Activated CD4-positive, alpha-beta memory T cell treated with anti-CD3 and anti-CD28 coated beads, Interleukin-2, amount 10 ng/mL, durations not matched to agents 7 days and 5 days (primary cell): ENCODE measurements at regions of chr6 and their contacts with region 1.

Region 1: GRCh38 chr6:131914967-131915751 is 36.0 kb downstream of the CCN2 start:
- DNase-seq: peak; percentile 59
- H3K4me3 Mint-ChIP-seq: no peak overlapping the region
- H3K27ac Mint-ChIP-seq: no peak overlapping the region
- H3K4me1 Mint-ChIP-seq: peaks cover 22% of the 10 kb centered on the region
- H3K27me3 Mint-ChIP-seq: peaks cover 56% of the 10 kb centered on the region

Region 2: GRCh38 chr6:132218059-132218696 is 303.0 kb after region 1 on chr6:
- CTCF ChIA-PET with region 1: interaction called, 15 read pairs
- POLR2A ChIA-PET with region 1: no interaction called
- DNase-seq: no peak
- H3K4me3 Mint-ChIP-seq: no peak overlapping the region
- H3K27ac Mint-ChIP-seq: no peak overlapping the region
- H3K4me1 Mint-ChIP-seq: no peaks in the 10 kb centered on the region
- H3K27me3 Mint-ChIP-seq: peaks cover 3% of the 10 kb centered on the region